ENCODE measurements at regions of chr15 and their contacts with region 1.

Region 1: DNA sequence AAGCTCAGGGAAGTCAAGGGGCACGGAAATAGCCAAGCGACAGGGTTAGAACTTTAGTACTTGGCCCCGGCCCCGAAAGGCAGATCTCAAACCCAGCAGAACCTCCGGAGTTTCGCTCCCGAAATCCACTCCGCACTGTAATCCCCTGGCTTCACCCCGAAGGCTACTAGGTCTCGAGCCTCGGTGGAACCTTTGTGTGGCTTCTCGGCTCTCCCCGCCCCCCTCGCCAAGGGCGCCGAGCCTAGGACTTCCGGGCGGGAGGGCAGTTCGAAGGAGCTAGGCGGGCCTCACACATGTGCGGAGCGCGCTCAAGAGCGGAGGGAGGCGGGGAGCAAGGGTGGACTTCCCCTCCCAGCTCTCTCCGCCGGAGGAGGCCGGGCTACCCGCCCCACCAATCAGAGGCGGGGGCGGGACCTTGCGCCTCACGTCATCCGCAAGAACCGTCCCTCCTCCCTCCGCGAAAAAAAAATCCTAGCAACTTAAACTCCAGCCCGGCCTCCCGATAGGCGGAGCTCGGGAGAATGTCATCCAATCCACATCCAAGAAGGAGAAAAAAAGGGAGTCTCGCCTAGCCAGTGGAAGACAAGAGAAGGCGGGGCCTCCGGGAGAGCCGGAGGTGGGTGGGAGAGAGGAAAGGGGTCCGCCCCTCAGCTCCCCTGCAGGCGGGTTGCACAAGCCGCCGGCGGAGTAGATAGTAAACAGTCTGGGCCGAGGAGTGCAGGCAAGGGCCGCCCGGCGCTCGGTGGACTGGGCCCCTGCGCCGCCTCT is 2.4 kb upstream of the SIN3A start:
- DNase-seq: peak; percentile 98 to 99
- ATAC-seq: peak; percentile 45 to 50
- H3K4me3 ChIP-seq: peak overlapping the region; percentile 87 to 98 (median 94)
- H3K27ac ChIP-seq: peak overlapping the region; percentile 98 to 100 (median 100)
- H3K4me1 ChIP-seq: peaks cover 21 to 29% of the 10 kb centered on the region in 2 donors
- H3K27me3 ChIP-seq: no peaks in the 10 kb centered on the region
- CTCF ChIP-seq: no peak
- POLR2A ChIP-seq: peak; percentile 82 to 86

Region 2: DNA sequence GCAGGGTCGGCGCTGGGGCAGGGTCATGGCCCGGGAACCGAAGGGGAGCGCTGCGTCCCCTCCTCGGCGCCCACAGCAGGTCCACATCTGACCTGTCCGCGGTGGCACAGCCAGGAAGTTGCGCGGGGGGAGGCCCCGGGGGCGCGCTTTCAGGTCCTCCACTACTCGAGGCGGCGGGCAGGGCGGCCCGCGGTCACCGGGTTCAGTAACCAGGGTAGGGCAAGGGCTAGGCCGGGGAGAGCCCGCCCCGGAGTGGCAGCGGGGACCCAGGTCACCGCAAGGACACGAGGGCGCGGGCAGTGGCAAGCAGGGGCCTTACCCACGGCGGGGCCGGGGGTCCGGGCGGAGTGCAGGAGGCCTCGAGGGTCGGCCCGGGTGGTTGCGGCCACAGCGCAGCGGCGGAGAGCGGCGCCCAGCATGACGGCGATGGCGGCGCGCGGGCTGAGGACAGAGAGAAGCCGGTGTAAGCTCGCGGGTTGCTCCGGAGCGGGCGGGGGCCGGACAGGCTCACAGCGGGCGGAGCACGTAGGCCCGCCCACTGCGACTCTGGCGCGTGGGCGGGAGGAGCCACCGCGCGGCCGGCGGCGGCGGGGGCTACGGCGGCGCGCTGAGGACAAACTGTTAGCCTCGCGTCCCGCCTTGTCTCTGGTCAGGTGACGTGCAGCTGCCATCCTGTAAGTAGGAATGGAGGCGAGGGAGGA is 516.1 kb before region 1 on chr15 and contains the start of gene COX5A:
- in situ Hi-C with region 1: no loop called
- intact Hi-C with region 1: loop called (anchors 5 kb)
- DNase-seq: peak; percentile 92 to 96
- ATAC-seq: peak; percentile 94 to 95
- H3K4me3 ChIP-seq: peak within 1 kb of the TSS; percentile 74 to 93 (median 90)
- H3K27ac ChIP-seq: peak within 1 kb of the TSS; percentile 96 to 100 (median 96)
- H3K4me1 ChIP-seq: peaks cover 32 to 35% of the 10 kb centered on the region in 2 donors
- H3K27me3 ChIP-seq: no peaks in the 10 kb centered on the region
- CTCF ChIP-seq: peak in 1 of 5 experiments; percentile 17
- POLR2A ChIP-seq: peak; percentile 91 to 93
- total RNA-seq, gene COX5A: 425 to 558 (median 512) TPM

Region 3: GRCh38 chr15:74978503-74978902 is 475.4 kb before region 1 on chr15:
- in situ Hi-C with region 1: no loop called
- intact Hi-C with region 1: no loop called
- DNase-seq: no peak
- ATAC-seq: no peak
- H3K4me3 ChIP-seq: no peak overlapping the region
- H3K27ac ChIP-seq: no peak overlapping the region
- H3K4me1 ChIP-seq: no peaks in the 10 kb centered on the region
- H3K27me3 ChIP-seq: peaks cover 0 to 4% (median 0%) of the 10 kb centered on the region in 3 donors
- CTCF ChIP-seq: no peak
- POLR2A ChIP-seq: no peak

Region 4: DNA sequence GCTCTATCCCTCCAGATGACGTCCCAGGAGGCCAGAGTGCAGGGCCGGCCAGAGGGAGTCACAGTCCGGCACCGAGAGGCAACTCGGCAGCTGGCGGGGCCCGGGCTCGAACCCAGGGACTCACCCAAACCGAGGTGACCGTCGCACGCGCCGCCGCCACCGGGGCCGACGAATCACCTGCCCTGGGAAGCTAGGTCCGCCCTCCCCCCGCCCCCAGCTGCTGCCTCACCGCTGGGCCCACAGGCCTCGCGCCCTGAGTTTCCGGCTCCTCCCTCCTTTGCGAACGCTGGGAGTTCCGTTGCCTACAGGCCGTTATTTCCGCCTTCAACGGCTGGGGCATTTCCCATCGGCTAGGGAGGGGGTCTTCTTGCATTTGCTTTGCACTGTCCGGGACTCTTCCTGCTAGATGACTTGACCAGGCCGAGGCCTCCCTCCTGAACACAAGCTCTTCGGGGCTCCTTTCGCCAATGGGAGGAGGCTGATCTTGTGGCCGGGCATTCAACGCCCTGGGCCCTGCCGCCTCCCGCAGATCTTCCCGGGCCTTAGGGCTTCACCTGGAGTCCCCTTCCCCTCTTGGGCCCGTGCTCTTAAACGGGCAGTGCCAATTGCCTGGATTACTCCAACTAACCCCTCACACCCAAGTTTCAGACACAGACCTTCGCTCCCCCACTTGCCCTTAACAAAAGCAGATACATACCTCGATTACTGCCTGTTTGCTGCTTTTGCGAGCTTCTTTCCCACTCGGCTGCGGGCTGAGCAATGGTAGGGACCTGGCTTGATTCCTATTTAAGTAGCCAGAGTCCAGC is 171.9 kb after region 1 on chr15 and contains the start of gene SNUPN:
- in situ Hi-C with region 1: no loop called
- intact Hi-C with region 1: loop called (anchors 1 kb)
- DNase-seq: peak; percentile 92 to 93
- ATAC-seq: peak; percentile 95
- H3K4me3 ChIP-seq: peak within 1 kb of the TSS; percentile 82 to 93 (median 84)
- H3K27ac ChIP-seq: peak within 1 kb of the TSS; percentile 95 to 97 (median 96)
- H3K4me1 ChIP-seq: peaks cover 4 to 6% of the 10 kb centered on the region in 2 donors
- H3K27me3 ChIP-seq: no peaks in the 10 kb centered on the region
- CTCF ChIP-seq: no peak
- POLR2A ChIP-seq: peak; percentile 38 to 53
- total RNA-seq, gene SNUPN: 14.2 to 18.3 (median 15.9) TPM

Region 5: DNA sequence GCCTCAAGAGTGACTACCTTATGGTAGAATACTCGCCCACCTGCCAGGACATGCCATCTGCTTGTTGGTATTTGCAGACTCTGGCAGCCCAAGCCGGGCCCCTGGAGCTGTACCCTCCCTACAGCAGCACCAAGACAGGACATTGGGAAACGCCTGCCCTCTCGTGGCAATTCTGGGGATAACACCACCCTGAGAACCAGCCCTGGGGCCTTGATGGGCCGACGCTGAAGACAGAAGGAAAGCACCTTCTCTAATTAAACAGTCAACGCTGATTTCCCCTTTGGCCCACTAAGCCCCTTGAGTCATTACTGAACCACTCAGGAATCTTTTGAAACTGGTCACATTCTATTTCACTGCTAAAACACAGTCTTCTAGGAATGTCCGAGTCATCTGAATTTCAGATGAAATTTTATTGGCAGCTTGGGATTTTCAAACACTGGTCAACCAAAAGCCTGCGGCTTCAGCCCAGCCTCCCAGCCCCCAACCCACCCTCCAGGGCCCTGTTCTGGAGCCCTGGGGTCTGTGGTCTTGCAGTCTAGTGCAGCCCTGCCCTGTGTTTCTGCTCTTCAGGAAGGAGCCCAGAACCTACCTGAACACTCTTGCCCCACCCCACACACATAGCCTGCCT is 697.2 kb after region 1 on chr15:
- in situ Hi-C with region 1: no loop called
- intact Hi-C with region 1: loop called (anchors 10 kb)
- DNase-seq: peak in 1 of 2 donors; percentile 72
- ATAC-seq: peak; percentile 60 to 71
- H3K4me3 ChIP-seq: no peak overlapping the region
- H3K27ac ChIP-seq: peak overlapping the region; percentile 33 to 66 (median 62)
- H3K4me1 ChIP-seq: peaks cover 22 to 24% of the 10 kb centered on the region in 2 donors
- H3K27me3 ChIP-seq: no peaks in the 10 kb centered on the region
- CTCF ChIP-seq: peak; percentile 79 to 92 (median 87)
- POLR2A ChIP-seq: no peak